ENCODE measurements at regions of chr13 and their contacts with region 1.

Region 1: GRCh38 chr13:19959831-19960652 is 1.5 kb downstream of the ZMYM2 start:
- DNase-seq: peak; percentile 93
- H3K4me3 ChIP-seq: peak overlapping the region; percentile 86 to 90 (median 88)
- H3K27ac ChIP-seq: peak overlapping the region; percentile 98 to 100 (median 100)
- H3K4me1 ChIP-seq: peaks cover 0 to 46% (median 44%) of the 10 kb centered on the region in 4 donors
- H3K27me3 ChIP-seq: no peaks in the 10 kb centered on the region
- CTCF ChIP-seq: peak; percentile 84 to 96 (median 95)
- EP300 ChIP-seq: no peak
- POLR2A ChIP-seq: peak; percentile 41 to 47

Region 2: GRCh38 chr13:19633479-19634255 is 326.4 kb before region 1 on chr13 and contains the start of gene MPHOSPH8:
- intact Hi-C with region 1: loop called (anchors 10 kb)
- DNase-seq: peak; percentile 97
- H3K4me3 ChIP-seq: peak within 1 kb of the TSS; percentile 73 to 95 (median 82)
- H3K27ac ChIP-seq: peak within 1 kb of the TSS; percentile 90 to 95 (median 93)
- H3K4me1 ChIP-seq: peaks cover 0 to 40% (median 21%) of the 10 kb centered on the region in 4 donors
- H3K27me3 ChIP-seq: no peaks in the 10 kb centered on the region
- CTCF ChIP-seq: no peak
- EP300 ChIP-seq: no peak
- POLR2A ChIP-seq: peak; percentile 82 to 85
- total RNA-seq, gene MPHOSPH8: 37.4 to 47.6 (median 41.1) TPM

Region 3: GRCh38 chr13:19845758-19846157 is 114.3 kb before region 1 on chr13:
- intact Hi-C with region 1: loop called (anchors 5 kb)
- DNase-seq: peak; percentile 71
- H3K4me3 ChIP-seq: no peak overlapping the region
- H3K27ac ChIP-seq: peak overlapping the region; percentile 1 to 72 (median 63)
- H3K4me1 ChIP-seq: peaks cover 0 to 46% (median 15%) of the 10 kb centered on the region in 4 donors
- H3K27me3 ChIP-seq: no peaks in the 10 kb centered on the region
- CTCF ChIP-seq: no peak
- EP300 ChIP-seq: no peak
- POLR2A ChIP-seq: no peak

Region 4: DNA sequence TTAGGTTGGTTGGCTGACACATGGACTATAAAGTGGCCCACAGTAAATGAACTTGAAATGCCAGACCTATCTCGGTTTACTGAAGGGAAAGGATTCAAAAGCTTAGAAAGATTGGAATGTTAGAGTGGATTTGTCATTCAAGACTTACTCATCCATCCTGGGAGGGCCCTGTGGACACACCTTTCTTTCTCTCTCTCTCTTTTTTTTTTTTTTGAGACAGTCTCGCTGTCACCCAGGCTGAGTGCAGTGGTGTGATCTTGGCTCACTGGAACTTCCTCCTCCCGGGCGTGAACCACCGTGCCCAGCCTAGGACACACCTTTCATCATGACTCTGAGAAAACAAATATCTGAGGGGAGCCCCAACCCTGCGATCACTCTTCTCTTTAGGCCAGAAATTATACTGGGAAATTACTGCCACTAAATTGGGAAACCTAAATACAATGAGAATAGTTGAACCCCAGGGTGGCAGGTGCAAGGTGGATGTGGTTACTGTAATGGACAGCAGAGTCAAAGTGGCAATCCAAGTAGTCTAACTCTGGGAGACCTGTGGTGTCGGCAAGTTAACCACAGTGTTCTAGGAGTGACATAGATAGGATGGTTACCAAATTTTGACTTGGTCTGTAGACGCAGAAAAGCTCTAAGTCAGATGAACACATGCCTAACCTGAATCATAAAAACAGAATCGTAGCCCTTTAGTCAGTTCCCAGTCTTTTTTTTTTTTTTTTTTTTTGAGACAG is 49.5 kb before region 1 on chr13:
- intact Hi-C with region 1: no loop called
- DNase-seq: no peak
- H3K4me3 ChIP-seq: no peak overlapping the region
- H3K27ac ChIP-seq: no peak overlapping the region
- H3K4me1 ChIP-seq: no peaks in the 10 kb centered on the region
- H3K27me3 ChIP-seq: no peaks in the 10 kb centered on the region
- CTCF ChIP-seq: no peak
- EP300 ChIP-seq: no peak
- POLR2A ChIP-seq: no peak

Region 5: DNA sequence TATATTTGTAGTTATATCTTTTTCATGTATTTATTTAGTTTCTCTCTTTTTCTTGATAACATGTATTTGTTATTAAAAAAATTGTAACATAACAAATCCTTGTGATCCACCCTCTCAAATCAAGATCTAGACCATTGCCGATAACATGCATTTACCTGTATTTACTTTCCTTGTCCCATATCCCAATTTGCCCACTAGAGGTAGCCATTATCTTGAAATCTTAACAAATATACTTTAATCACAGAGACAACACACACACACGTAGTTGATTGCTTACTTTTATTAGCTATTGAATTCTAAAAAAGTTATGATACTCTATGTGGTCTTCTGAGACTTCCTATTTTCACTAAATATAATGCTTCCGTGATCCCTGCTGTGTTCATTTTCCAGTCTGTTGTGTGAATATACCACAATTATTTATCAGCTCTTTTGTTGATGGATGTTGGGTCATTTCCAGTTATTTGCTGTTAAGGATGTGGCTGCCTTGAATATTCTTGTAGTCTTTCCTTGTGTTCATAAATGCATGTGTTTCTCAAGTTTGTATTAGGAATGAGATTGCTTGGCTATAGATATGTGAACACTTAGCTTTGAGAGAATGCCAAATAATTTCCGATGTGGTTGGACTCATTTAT is 32.8 kb before region 1 on chr13:
- intact Hi-C with region 1: loop called (anchors 5 kb)
- DNase-seq: no peak
- H3K4me3 ChIP-seq: no peak overlapping the region
- H3K27ac ChIP-seq: no peak overlapping the region
- H3K4me1 ChIP-seq: no peaks in the 10 kb centered on the region
- H3K27me3 ChIP-seq: no peaks in the 10 kb centered on the region
- CTCF ChIP-seq: peak; percentile 31 to 57 (median 46)
- EP300 ChIP-seq: no peak
- POLR2A ChIP-seq: no peak

Region 6: GRCh38 chr13:20006206-20006605 is 46.2 kb after region 1 on chr13:
- intact Hi-C with region 1: no loop called
- DNase-seq: no peak
- H3K4me3 ChIP-seq: no peak overlapping the region
- H3K27ac ChIP-seq: no peak overlapping the region
- H3K4me1 ChIP-seq: peaks cover 0 to 18% (median under 1%) of the 10 kb centered on the region in 4 donors
- H3K27me3 ChIP-seq: no peaks in the 10 kb centered on the region
- CTCF ChIP-seq: no peak
- EP300 ChIP-seq: no peak
- POLR2A ChIP-seq: no peak

Region 7: GRCh38 chr13:20160847-20161274 is 200.8 kb after region 1 on chr13 and contains the start of gene GJA3:
- intact Hi-C with region 1: loop called (anchors 10 kb)
- DNase-seq: no peak
- H3K4me3 ChIP-seq: peak within 1 kb of the TSS in 3 of 4 donors; percentile 26 to 41 (median 38)
- H3K27ac ChIP-seq: no peak within 1 kb of the TSS
- H3K4me1 ChIP-seq: peaks cover 0 to 25% (median 17%) of the 10 kb centered on the region in 4 donors
- H3K27me3 ChIP-seq: peaks cover 36 to 85% (median 64%) of the 10 kb centered on the region in 3 donors
- CTCF ChIP-seq: no peak
- EP300 ChIP-seq: no peak
- POLR2A ChIP-seq: no peak
- total RNA-seq, gene GJA3: not detected